IMR-90 (cell line): ENCODE measurements at regions of chr12 and their contacts with region 1.

Region 1: GRCh38 chr12:40312982-40313576 is 88.3 kb downstream of the LRRK2 start:
- DNase-seq: peak; percentile 31
- ATAC-seq: no peak
- H3K4me3 ChIP-seq: no peak overlapping the region
- H3K27ac ChIP-seq: no peak overlapping the region
- H3K4me1 ChIP-seq: no peaks in the 10 kb centered on the region
- H3K27me3 ChIP-seq: no peaks in the 10 kb centered on the region
- CTCF ChIP-seq: peak; percentile 77
- POLR2A ChIP-seq: no peak
- RAD21 ChIP-seq: peak; percentile 68

Region 2: DNA sequence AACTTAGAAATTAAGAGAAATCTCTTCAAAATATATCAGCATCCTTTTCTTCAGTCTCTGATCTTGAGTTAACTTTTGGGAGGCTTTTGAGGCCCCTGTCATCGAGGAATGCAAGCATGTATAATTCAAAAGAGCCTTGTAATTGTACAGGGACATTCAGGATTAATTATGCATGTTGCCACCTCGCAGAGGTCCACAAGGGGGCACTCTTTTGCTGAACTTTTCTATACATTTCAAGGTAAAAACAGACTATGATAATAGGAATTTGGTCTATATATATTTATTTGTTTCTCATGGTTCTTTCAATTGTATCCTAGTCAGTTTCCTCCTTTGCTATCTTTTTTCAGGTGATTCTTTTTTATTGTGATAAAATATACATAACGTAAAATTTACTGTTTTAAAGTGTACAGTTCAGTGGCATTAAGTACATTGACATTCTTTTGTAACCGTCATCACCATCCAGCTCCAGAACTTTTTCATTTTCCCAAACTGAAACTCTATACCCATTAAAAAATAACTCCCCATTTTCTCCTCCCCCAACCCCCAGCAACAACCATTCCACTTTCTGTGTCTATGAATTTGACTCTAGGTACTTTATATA is 160.2 kb before region 1 on chr12:
- CTCF ChIA-PET with region 1: no interaction called
- POLR2A ChIA-PET with region 1: no interaction called
- dilution Hi-C with region 1: no loop called
- in situ Hi-C with region 1: loop called (anchors 5 kb)
- intact Hi-C with region 1: loop called (anchors 1 kb)
- DNase-seq: peak; percentile 32
- ATAC-seq: no peak; the same call in 1 of the 2 replicates
- H3K4me3 ChIP-seq: no peak overlapping the region
- H3K27ac ChIP-seq: no peak overlapping the region
- H3K4me1 ChIP-seq: no peaks in the 10 kb centered on the region
- H3K27me3 ChIP-seq: no peaks in the 10 kb centered on the region
- CTCF ChIP-seq: peak; percentile 76
- POLR2A ChIP-seq: no peak
- RAD21 ChIP-seq: peak; percentile 60

Region 3: DNA sequence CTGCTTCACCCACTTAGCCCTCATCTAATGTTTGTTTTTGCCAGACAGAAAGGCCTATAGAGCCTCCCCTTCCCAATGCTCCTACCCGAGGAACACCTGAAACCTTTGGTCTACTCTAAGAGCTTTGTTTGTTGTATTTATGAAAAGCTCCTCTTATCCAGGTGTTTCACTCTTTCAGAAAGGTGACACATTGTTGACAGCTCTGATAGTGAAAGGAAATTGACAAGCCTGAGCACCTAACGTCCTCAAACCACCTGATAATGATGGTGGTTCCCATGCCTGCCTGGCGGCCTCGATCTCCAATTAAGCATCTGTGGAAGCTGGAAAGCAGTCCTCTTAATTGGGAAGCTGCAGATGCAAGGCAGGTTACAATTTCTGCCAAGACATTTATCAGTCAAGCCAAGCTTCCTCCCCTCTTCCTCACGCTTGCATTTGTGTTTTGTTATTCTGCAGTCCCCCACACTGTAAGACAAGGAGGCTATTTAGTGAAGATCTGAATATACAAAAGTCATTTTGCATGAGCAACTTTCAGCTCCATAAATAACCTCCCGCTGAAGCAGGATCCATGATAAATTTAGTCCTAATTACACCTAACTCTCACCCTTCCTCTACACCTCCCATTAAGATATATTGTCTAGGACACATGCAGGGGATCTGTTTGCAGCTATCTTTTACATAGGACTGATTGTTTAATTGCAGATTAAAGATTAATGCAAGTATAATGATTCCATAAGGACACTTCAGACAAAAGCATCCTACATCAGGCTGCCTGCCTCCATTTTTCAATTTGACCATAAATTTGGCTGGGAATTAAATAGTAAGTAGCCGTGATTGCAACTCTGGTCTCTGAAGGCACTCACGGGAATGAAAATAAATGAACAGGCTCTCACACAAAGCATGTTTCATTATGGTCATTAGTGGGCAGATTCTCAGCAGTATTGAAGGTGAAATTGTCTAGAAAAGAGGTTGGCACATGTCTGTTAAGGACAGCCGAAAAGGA is 1163.7 kb after region 1 on chr12:
- CTCF ChIA-PET with region 1: no interaction called
- POLR2A ChIA-PET with region 1: no interaction called
- dilution Hi-C with region 1: no loop called
- in situ Hi-C with region 1: no loop called
- intact Hi-C with region 1: no loop called
- DNase-seq: no peak
- ATAC-seq: no peak
- H3K4me3 ChIP-seq: no peak overlapping the region
- H3K27ac ChIP-seq: no peak overlapping the region
- H3K4me1 ChIP-seq: no peaks in the 10 kb centered on the region
- H3K27me3 ChIP-seq: no peaks in the 10 kb centered on the region; the same call in 1 of the 2 replicates
- CTCF ChIP-seq: no peak
- POLR2A ChIP-seq: no peak
- RAD21 ChIP-seq: no peak